ENCODE measurements at regions of chr16 and their contacts with region 1.

Region 1: DNA sequence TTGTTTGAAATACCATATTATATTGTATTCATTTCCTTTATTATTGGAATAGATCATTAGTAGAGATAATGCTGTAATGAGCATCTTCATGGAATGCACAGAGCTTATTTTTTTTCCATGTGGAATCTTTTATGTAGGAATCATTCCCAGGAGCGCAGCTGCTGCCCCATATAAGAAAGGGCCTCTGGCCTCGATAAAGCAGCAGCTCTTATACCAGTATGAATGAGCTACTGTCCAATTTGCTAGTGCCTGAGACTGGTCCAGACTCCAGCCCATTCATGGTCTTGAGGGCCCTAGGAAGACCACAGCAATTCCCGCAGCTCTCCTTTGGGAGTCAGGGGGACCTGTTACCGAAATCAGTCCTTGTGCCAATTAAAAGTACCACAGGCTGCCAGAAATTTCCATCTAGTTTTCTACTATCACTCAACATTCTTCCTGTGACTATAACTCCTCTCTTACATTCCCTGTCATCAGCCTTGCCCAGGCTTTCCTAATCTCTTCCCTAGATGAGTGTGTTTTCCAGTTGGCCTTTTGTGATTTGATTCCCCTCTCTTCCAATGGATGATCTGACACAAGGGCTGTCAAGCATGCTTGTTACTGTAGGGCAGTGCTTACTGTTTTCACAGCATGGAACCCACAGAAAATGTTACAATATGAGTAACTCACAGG is 1.9 kb downstream of the ZNF843 start:
- DNase-seq: no peak
- ATAC-seq: no peak

Region 2: GRCh38 chr16:31179747-31180459 is 260.7 kb before region 1 on chr16 and contains the start of gene FUS:
- intact Hi-C with region 1: loop called (anchors 10 kb)
- DNase-seq: peak; percentile 96
- ATAC-seq: peak; percentile 89
- total RNA-seq, gene FUS: 86.8 TPM

Region 3: GRCh38 chr16:31365131-31365865 is 75.4 kb before region 1 on chr16:
- intact Hi-C with region 1: no loop called
- DNase-seq: peak; percentile 54
- ATAC-seq: no peak

Measured in Right ventricle myocardium inferior (tissue), 1 donor.